Activated T-helper 2 cell treated with anti-CD3 and anti-CD28 coated beads, Interferon-gamma antibody, Interleukin-2, Interleukin-4, amounts not matched to agents 10 μg/mL and 5 μg/mL and 100 μg/mL, durations not matched to agents 14 hours and 24 hours and 36 hours (primary cell): ENCODE measurements at regions of chr4 and their contacts with region 1.

Region 1: GRCh38 chr4:48127682-48128394 is 6.2 kb downstream of the TXK start:
- DNase-seq: peak; percentile 72
- H3K4me3 Mint-ChIP-seq: peak overlapping the region; percentile 3
- H3K27ac Mint-ChIP-seq: peak overlapping the region; percentile 74
- H3K4me1 Mint-ChIP-seq: peaks cover 54% of the 10 kb centered on the region
- H3K27me3 Mint-ChIP-seq: peaks cover 2% of the 10 kb centered on the region

Region 2: GRCh38 chr4:47914220-47914925 is 213.5 kb before region 1 on chr4 and contains the start of gene NFXL1:
- intact Hi-C with region 1: loop called (anchors 10 kb)
- DNase-seq: peak; percentile 93
- H3K4me3 Mint-ChIP-seq: peak within 1 kb of the TSS; percentile 90
- H3K27ac Mint-ChIP-seq: peak within 1 kb of the TSS; percentile 83
- H3K4me1 Mint-ChIP-seq: peaks cover 22% of the 10 kb centered on the region
- H3K27me3 Mint-ChIP-seq: no peaks in the 10 kb centered on the region
- total RNA-seq, gene NFXL1: 11.9 and 13.3 TPM in 2 replicates

Region 3: DNA sequence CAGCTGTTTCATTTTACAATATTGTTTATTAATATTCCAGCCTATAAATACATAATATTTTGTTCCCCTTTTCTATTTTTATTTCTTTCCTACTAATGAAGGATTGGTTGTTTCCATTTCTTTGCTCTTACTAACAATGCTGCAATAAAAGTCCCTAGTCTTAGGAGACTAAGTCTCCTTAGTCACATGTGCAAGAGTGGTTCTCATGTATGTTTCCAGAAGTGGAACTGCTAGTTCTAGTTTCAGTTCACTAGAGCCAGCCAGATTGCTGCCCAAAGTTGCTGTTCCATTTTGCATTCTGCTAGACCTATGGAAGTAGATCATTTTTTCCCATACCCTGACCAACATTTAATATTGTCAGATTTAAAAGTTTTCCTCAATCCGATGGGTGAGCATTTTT is 155.7 kb before region 1 on chr4:
- intact Hi-C with region 1: no loop called
- DNase-seq: no peak
- H3K4me3 Mint-ChIP-seq: no peak overlapping the region
- H3K27ac Mint-ChIP-seq: no peak overlapping the region
- H3K4me1 Mint-ChIP-seq: no peaks in the 10 kb centered on the region
- H3K27me3 Mint-ChIP-seq: no peaks in the 10 kb centered on the region

Region 4: GRCh38 chr4:48103483-48104139 is 24.2 kb before region 1 on chr4:
- intact Hi-C with region 1: loop called (anchors 1 kb)
- DNase-seq: no peak
- H3K4me3 Mint-ChIP-seq: no peak overlapping the region
- H3K27ac Mint-ChIP-seq: peak overlapping the region; percentile 54
- H3K4me1 Mint-ChIP-seq: peaks cover 15% of the 10 kb centered on the region
- H3K27me3 Mint-ChIP-seq: no peaks in the 10 kb centered on the region

Region 5: DNA sequence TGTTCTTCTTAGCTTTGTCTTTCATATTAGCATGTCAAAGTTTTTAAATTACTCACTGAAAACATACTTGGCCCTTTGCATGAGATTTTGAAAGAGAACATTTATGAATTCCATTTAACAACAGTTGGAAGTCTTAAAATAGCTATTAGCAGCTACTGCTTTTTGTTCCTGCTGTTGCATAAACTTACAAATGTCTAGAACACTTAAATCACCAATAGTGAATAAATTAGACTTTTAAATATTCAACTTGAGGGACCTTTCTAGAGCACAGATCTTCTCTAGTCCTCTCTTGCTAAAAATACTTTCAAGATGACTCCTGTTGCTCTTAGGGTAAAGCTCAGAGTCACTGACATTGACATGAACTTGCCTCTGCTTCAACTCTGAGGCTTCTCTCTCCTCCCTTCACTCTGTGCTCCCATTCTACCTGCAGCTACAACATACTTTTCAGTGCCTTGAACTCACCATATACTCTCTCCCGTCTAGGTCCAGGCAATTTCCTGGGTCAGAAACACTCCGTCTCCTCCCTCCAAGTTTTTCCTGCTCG is 22.1 kb after region 1 on chr4:
- intact Hi-C with region 1: no loop called
- DNase-seq: no peak
- H3K4me3 Mint-ChIP-seq: no peak overlapping the region
- H3K27ac Mint-ChIP-seq: no peak overlapping the region
- H3K4me1 Mint-ChIP-seq: peaks cover 2% of the 10 kb centered on the region
- H3K27me3 Mint-ChIP-seq: peaks cover 2% of the 10 kb centered on the region

Region 6: GRCh38 chr4:48162162-48162561 is 34.3 kb after region 1 on chr4:
- intact Hi-C with region 1: loop called (anchors 1 kb)
- DNase-seq: no peak
- H3K4me3 Mint-ChIP-seq: no peak overlapping the region
- H3K27ac Mint-ChIP-seq: no peak overlapping the region
- H3K4me1 Mint-ChIP-seq: peaks cover 14% of the 10 kb centered on the region
- H3K27me3 Mint-ChIP-seq: peaks cover 12% of the 10 kb centered on the region

Region 7: DNA sequence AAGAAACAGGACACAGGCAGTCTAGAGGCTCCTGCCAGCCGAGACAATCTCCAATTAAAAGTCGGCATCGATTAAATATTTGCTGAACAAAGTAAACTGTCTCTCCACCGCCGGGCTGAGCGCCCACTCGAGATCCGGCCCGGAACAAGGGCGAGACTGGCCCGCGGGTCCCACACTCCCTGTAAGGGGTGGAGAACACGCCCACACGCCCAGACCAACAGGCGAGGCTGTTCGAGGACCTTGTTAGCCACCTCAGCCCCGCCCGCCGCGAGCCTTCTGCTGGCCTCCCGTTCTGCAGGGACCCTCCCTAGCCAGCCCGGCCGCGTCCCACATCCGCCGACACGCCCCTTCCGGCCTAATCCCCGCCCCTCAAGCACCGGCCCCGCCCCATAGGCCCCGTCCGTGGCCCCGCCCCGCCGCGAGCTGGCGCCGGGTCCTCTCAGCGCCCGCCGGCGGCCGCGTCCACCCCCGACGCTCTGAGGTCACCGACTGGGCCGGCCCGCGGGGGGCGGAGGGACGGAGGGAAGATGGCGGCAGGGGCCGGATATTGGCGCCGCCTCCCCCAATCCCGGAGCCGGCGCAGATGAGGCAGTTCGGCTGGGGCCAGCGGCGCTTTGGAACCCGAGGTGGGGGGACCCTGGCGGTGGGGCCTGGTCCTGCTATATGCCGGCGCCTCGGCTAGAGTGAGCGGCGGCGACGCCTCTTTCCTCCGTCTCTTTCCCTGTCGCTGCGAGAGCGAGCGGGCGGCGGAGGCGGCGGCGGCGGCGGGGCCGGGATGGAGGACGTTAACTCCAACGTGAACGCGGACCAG is 213.3 kb after region 1 on chr4 and contains the start of gene SLAIN2:
- intact Hi-C with region 1: loop called (anchors 2 kb)
- DNase-seq: peak; percentile 98
- H3K4me3 Mint-ChIP-seq: peak within 1 kb of the TSS; percentile 98
- H3K27ac Mint-ChIP-seq: peak within 1 kb of the TSS; percentile 97
- H3K4me1 Mint-ChIP-seq: peaks cover 61% of the 10 kb centered on the region
- H3K27me3 Mint-ChIP-seq: no peaks in the 10 kb centered on the region
- total RNA-seq, gene SLAIN2: 60.4 and 67.1 TPM in 2 replicates